ENCODE measurements at regions of chr10 and their contacts with region 1.

Region 1: GRCh38 chr10:104209575-104210198 is 22.5 kb downstream of the CFAP43 start:
- DNase-seq: peak; percentile 38 to 55 (median 42)
- H3K4me3 ChIP-seq: no peak overlapping the region
- H3K4me3 Mint-ChIP-seq: no peak overlapping the region
- H3K27ac ChIP-seq: no peak overlapping the region
- H3K27ac Mint-ChIP-seq: no peak overlapping the region
- H3K4me1 ChIP-seq: no peaks in the 10 kb centered on the region
- H3K4me1 Mint-ChIP-seq: no peaks in the 10 kb centered on the region
- H3K27me3 ChIP-seq: no peaks in the 10 kb centered on the region
- H3K27me3 Mint-ChIP-seq: peaks cover 7 to 16% of the 10 kb centered on the region in 2 donors

Region 2: GRCh38 chr10:104028146-104028545 is 181.5 kb before region 1 on chr10:
- CTCF ChIA-PET with region 1: no interaction called
- POLR2A ChIA-PET with region 1: no interaction called
- intact Hi-C with region 1: loop called (anchors 10 kb)
- DNase-seq: peak in 2 of 5 donors; percentile 8 to 20
- H3K4me3 ChIP-seq: no peak overlapping the region
- H3K4me3 Mint-ChIP-seq: no peak overlapping the region
- H3K27ac ChIP-seq: no peak overlapping the region
- H3K27ac Mint-ChIP-seq: peak overlapping the region in 4 of 7 donors; percentile 11 to 89 (median 44)
- H3K4me1 ChIP-seq: no peaks in the 10 kb centered on the region
- H3K4me1 Mint-ChIP-seq: peaks cover 3 to 8% (median 4%) of the 10 kb centered on the region in 4 donors
- H3K27me3 ChIP-seq: no peaks in the 10 kb centered on the region
- H3K27me3 Mint-ChIP-seq: no peaks in the 10 kb centered on the region